ENCODE measurements at regions of chr2 and their contacts with region 1.

Region 1: GRCh38 chr2:42663106-42663780 is 94.8 kb downstream of the MTA3 start:
- DNase-seq: peak; percentile 5
- H3K4me3 ChIP-seq: no peak overlapping the region
- H3K27ac ChIP-seq: no peak overlapping the region
- H3K4me1 ChIP-seq: no peaks in the 10 kb centered on the region
- H3K27me3 ChIP-seq: no peaks in the 10 kb centered on the region
- CTCF ChIP-seq: peak; percentile 88 to 99 (median 98)

Region 2: DNA sequence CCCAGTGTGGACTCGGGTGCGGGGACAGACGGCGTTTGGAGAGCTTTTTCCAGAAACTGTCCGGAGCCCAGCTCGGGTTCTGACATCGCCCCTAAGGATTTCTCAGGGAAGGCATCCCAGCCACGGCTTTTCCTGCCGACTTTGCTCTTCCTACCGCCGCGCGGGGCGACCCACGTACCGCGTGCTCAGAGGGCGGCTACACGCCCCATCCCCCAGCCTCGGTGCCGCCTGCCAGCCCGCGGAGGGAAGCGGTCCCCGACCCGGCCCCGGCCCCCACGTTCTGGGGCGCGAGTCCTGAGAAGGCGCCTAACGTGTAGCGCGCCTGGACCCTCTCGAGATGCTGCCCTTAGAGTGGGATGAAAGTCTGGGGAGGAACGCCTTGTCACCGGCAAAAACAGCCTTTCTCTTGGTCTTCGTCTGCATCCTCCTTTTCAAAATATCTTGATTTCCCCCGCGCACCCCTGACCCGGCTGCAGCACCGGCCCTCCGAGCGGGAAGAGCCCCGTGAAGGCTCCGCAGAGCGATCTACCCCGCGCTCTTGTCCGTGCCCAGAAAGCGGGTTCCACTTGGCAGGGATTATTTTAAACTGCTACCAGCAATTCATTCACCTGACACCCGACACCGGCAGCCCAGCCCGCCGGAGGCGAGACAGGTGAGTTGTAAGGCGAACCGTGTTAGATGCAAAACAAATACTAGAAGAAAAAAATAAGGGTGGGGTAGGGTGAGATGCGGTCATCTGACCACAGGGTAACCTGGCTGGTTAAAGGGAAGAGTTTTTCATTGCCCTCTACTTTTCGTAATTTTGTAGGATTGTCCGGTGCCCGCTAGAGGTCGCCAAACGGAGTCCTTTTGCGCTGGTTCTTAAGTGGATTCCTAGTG is 168.6 kb before region 1 on chr2:
- dilution Hi-C with region 1: loop called (anchors 10 kb)
- DNase-seq: peak; percentile 50
- H3K4me3 ChIP-seq: peak overlapping the region; percentile 37 to 71 (median 60)
- H3K27ac ChIP-seq: no peak overlapping the region
- H3K4me1 ChIP-seq: peaks cover 9% of the 10 kb centered on the region
- H3K27me3 ChIP-seq: peaks cover 27% of the 10 kb centered on the region
- CTCF ChIP-seq: peak; percentile 74 to 87 (median 82)

Region 3: GRCh38 chr2:42722320-42723190 is 59.3 kb after region 1 on chr2:
- dilution Hi-C with region 1: no loop called
- DNase-seq: no peak
- H3K4me3 ChIP-seq: no peak overlapping the region
- H3K27ac ChIP-seq: no peak overlapping the region
- H3K4me1 ChIP-seq: peaks cover 6% of the 10 kb centered on the region
- H3K27me3 ChIP-seq: no peaks in the 10 kb centered on the region
- CTCF ChIP-seq: no peak